T-cell (primary cell): ENCODE measurements at regions of chr15 and their contacts with region 1.

Region 1: DNA sequence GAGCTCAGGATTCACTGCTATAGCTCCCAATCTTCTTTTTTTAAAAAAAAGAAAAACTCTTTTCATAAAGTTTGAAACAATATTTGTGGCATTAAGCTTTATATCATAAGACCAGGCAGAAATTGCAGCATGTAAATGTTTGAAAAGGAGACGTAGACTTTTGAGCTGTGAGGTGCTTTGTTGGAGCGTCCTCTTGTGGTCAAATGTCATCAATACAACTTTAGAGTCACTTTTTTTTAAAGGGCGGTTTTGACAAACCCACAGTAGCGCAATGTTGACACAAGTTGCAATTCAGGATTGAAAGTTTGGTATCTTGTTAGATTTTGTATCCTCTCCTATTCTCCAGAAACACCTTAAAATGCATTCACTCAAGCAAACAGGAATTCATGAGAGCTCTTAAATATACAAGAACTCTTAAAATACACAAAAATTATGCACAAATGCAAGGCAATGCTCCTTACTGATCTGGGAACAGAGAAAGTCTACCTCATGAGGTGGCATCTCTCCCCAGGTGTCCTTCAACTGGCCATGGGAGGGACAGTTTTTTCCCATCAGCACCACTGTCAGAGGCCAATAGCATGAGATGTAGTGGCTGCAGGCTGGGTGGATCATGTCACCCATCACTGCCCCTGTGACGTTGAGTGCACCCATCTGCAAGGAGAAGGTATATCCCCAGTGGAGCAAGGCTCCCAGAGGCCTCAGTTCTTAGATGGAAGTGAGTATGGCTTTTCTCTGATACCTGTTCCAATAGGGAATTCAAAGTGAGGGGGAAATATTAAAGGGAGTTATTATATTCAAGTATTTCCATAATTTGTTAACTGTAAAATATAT is 70.7 kb downstream of the ANXA2 start:
- DNase-seq: peak in 21 of 35 experiments; percentile 2 to 77 (median 18)
- ATAC-seq: peak in 2 of 4 experiments; percentile 43 to 48
- H3K4me3 ChIP-seq: no peak overlapping the region
- H3K4me3 Mint-ChIP-seq: no peak overlapping the region
- H3K27ac ChIP-seq: no peak overlapping the region
- H3K27ac Mint-ChIP-seq: no peak overlapping the region
- H3K4me1 ChIP-seq: no peaks in the 10 kb centered on the region
- H3K4me1 Mint-ChIP-seq: peaks cover 0 to 6% (median 2%) of the 10 kb centered on the region in 3 donors
- H3K27me3 ChIP-seq: peaks cover 0 to 16% of the 10 kb centered on the region in 2 experiments
- H3K27me3 Mint-ChIP-seq: peaks cover 41% of the 10 kb centered on the region in 2 donors

Region 2: GRCh38 chr15:59688841-59689625 is 638.0 kb before region 1 on chr15 and contains the start of gene BNIP2:
- CTCF ChIA-PET with region 1: interaction called, 6 to 30 read pairs
- POLR2A ChIA-PET with region 1: interaction called in 1 of 2 experiments, 5 read pairs
- DNase-seq: peak; percentile 95 to 100 (median 100)
- ATAC-seq: peak; percentile 87 to 94 (median 92)
- H3K4me3 ChIP-seq: peak within 1 kb of the TSS; percentile 70 to 85
- H3K4me3 Mint-ChIP-seq: peak within 1 kb of the TSS; percentile 92 to 98 (median 93)
- H3K27ac ChIP-seq: peak within 1 kb of the TSS; percentile 94
- H3K27ac Mint-ChIP-seq: peak within 1 kb of the TSS; percentile 96 to 97
- H3K4me1 ChIP-seq: peaks cover 20 to 29% of the 10 kb centered on the region in 2 experiments
- H3K4me1 Mint-ChIP-seq: peaks cover 49 to 57% (median 55%) of the 10 kb centered on the region in 3 donors
- H3K27me3 ChIP-seq: no peaks in the 10 kb centered on the region
- H3K27me3 Mint-ChIP-seq: no peaks in the 10 kb centered on the region
- total RNA-seq, gene BNIP2: 71.5 to 96.5 (median 79.5) TPM

Region 3: DNA sequence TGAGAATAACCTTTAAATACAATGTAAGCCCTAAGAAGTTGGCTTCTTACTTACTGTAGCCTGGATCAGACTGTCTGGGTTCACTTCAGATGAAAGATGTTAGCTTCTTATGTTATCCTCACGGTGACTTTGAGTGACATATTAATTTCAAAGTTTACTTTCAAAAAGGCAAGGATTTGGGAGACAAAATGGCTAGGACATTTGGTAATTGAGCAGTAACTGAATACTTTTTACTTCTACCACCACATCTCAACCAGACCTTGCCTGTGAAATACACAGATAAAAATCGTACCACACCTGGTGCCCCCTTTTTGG is 601.9 kb before region 1 on chr15:
- CTCF ChIA-PET with region 1: interaction called, 8 to 40 read pairs
- POLR2A ChIA-PET with region 1: no interaction called
- DNase-seq: no peak
- ATAC-seq: no peak
- H3K4me3 ChIP-seq: no peak overlapping the region
- H3K4me3 Mint-ChIP-seq: no peak overlapping the region
- H3K27ac ChIP-seq: no peak overlapping the region
- H3K27ac Mint-ChIP-seq: no peak overlapping the region
- H3K4me1 ChIP-seq: no peaks in the 10 kb centered on the region
- H3K4me1 Mint-ChIP-seq: peaks cover 0 to 2% (median 2%) of the 10 kb centered on the region in 3 donors
- H3K27me3 ChIP-seq: no peaks in the 10 kb centered on the region
- H3K27me3 Mint-ChIP-seq: peaks cover 5 to 11% of the 10 kb centered on the region in 2 donors

Region 4: GRCh38 chr15:59751552-59752413 is 575.3 kb before region 1 on chr15:
- CTCF ChIA-PET with region 1: interaction called, 10 to 16 read pairs
- POLR2A ChIA-PET with region 1: no interaction called
- DNase-seq: peak in 8 of 35 experiments; percentile 6 to 80 (median 16)
- ATAC-seq: peak; percentile 93 to 100 (median 96)
- H3K4me3 ChIP-seq: no peak overlapping the region
- H3K4me3 Mint-ChIP-seq: no peak overlapping the region
- H3K27ac ChIP-seq: no peak overlapping the region
- H3K27ac Mint-ChIP-seq: no peak overlapping the region
- H3K4me1 ChIP-seq: peaks cover 3% of the 10 kb centered on the region in 2 experiments
- H3K4me1 Mint-ChIP-seq: peaks cover 8 to 11% (median 8%) of the 10 kb centered on the region in 3 donors
- H3K27me3 ChIP-seq: peaks cover 0 to 2% of the 10 kb centered on the region in 2 experiments
- H3K27me3 Mint-ChIP-seq: peaks cover 3 to 4% of the 10 kb centered on the region in 2 donors

Region 5: GRCh38 chr15:59917504-59918157 is 409.4 kb before region 1 on chr15:
- CTCF ChIA-PET with region 1: interaction called, 4 to 15 read pairs
- POLR2A ChIA-PET with region 1: no interaction called
- DNase-seq: peak; percentile 19 to 77 (median 52)
- ATAC-seq: peak; percentile 75 to 94 (median 78)
- H3K4me3 ChIP-seq: no peak overlapping the region
- H3K4me3 Mint-ChIP-seq: no peak overlapping the region
- H3K27ac ChIP-seq: no peak overlapping the region
- H3K27ac Mint-ChIP-seq: no peak overlapping the region
- H3K4me1 ChIP-seq: peaks cover 9% of the 10 kb centered on the region in 2 experiments
- H3K4me1 Mint-ChIP-seq: peaks cover 20 to 21% (median 21%) of the 10 kb centered on the region in 3 donors
- H3K27me3 ChIP-seq: peaks cover 0 to 5% of the 10 kb centered on the region in 2 experiments
- H3K27me3 Mint-ChIP-seq: peaks cover 10 to 11% of the 10 kb centered on the region in 2 donors

Region 6: GRCh38 chr15:60251229-60251628 is 75.8 kb before region 1 on chr15:
- CTCF ChIA-PET with region 1: no interaction called
- POLR2A ChIA-PET with region 1: no interaction called
- DNase-seq: no peak
- ATAC-seq: no peak
- H3K4me3 ChIP-seq: no peak overlapping the region
- H3K4me3 Mint-ChIP-seq: no peak overlapping the region
- H3K27ac ChIP-seq: no peak overlapping the region
- H3K27ac Mint-ChIP-seq: no peak overlapping the region
- H3K4me1 ChIP-seq: no peaks in the 10 kb centered on the region
- H3K4me1 Mint-ChIP-seq: no peaks in the 10 kb centered on the region
- H3K27me3 ChIP-seq: no peaks in the 10 kb centered on the region
- H3K27me3 Mint-ChIP-seq: peaks cover 22 to 24% of the 10 kb centered on the region in 2 donors

Region 7: GRCh38 chr15:60374628-60375081 is 47.6 kb after region 1 on chr15:
- CTCF ChIA-PET with region 1: no interaction called
- POLR2A ChIA-PET with region 1: no interaction called
- DNase-seq: no peak
- ATAC-seq: no peak
- H3K4me3 ChIP-seq: no peak overlapping the region
- H3K4me3 Mint-ChIP-seq: no peak overlapping the region
- H3K27ac ChIP-seq: no peak overlapping the region
- H3K27ac Mint-ChIP-seq: no peak overlapping the region
- H3K4me1 ChIP-seq: no peaks in the 10 kb centered on the region
- H3K4me1 Mint-ChIP-seq: peaks cover 0 to 29% (median 9%) of the 10 kb centered on the region in 3 donors
- H3K27me3 ChIP-seq: no peaks in the 10 kb centered on the region
- H3K27me3 Mint-ChIP-seq: peaks cover 0 to 3% of the 10 kb centered on the region in 2 donors